ENCODE measurements at regions of chr19 and their contacts with region 1.

Region 1: GRCh38 chr19:52237771-52238400 is 31.5 kb upstream of the ZNF766 start:
- DNase-seq: peak; percentile 66
- ATAC-seq: peak; percentile 76
- H3K4me3 Mint-ChIP-seq: no peak overlapping the region
- H3K27ac Mint-ChIP-seq: no peak overlapping the region
- H3K4me1 Mint-ChIP-seq: no peaks in the 10 kb centered on the region
- H3K27me3 Mint-ChIP-seq: no peaks in the 10 kb centered on the region

Region 2: GRCh38 chr19:52022193-52022592 is 215.7 kb before region 1 on chr19:
- CTCF ChIA-PET with region 1: no interaction called
- POLR2A ChIA-PET with region 1: no interaction called
- DNase-seq: no peak
- ATAC-seq: no peak
- H3K4me3 Mint-ChIP-seq: no peak overlapping the region
- H3K27ac Mint-ChIP-seq: no peak overlapping the region
- H3K4me1 Mint-ChIP-seq: peaks cover 6% of the 10 kb centered on the region
- H3K27me3 Mint-ChIP-seq: no peaks in the 10 kb centered on the region

Region 3: DNA sequence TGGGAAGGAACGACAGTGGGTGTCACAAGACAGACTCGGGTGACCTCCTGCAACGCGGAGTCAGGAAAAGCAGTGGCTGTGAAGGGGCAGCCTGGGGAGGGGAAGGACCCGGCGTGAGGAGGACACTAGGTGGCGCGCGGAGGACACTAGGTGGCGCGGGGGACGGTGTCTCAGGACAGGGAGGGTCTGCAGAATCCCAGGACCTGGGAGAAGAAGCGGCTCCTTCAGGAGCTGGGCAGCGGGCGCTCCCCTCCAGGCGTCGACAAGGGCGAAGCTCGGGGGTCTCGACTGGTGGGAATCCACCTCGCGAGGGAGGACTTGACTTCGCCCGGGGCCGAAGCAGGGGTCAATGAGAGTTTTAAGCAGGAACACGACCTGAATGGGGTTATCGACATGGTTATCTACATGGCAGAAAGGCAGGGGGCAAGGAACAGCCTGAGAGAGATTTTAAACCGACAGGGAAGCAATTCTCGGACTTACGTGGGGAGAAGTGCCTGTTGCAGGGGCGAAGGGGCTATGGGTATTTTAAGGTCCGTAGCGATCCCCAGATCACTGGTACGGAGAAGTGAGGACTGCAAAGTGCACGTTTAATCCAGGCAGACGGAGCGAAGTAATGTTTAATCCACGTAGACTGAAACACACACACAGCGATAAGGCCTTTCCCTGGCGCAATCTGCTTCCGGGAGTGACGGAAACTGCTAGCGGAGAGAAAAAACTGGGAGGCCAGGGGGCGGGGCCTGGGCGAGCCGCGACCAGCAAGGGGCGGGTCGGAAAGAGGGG is 98.4 kb before region 1 on chr19 and contains the start of gene ZNF616:
- CTCF ChIA-PET with region 1: interaction called, 27 read pairs
- POLR2A ChIA-PET with region 1: no interaction called
- DNase-seq: peak; percentile 98
- ATAC-seq: peak; percentile 86
- H3K4me3 Mint-ChIP-seq: peak within 1 kb of the TSS; percentile 92
- H3K27ac Mint-ChIP-seq: peak within 1 kb of the TSS; percentile 93
- H3K4me1 Mint-ChIP-seq: peaks cover 29% of the 10 kb centered on the region
- H3K27me3 Mint-ChIP-seq: no peaks in the 10 kb centered on the region
- total RNA-seq, gene ZNF616: 6.2 to 8.4 TPM

Region 4: DNA sequence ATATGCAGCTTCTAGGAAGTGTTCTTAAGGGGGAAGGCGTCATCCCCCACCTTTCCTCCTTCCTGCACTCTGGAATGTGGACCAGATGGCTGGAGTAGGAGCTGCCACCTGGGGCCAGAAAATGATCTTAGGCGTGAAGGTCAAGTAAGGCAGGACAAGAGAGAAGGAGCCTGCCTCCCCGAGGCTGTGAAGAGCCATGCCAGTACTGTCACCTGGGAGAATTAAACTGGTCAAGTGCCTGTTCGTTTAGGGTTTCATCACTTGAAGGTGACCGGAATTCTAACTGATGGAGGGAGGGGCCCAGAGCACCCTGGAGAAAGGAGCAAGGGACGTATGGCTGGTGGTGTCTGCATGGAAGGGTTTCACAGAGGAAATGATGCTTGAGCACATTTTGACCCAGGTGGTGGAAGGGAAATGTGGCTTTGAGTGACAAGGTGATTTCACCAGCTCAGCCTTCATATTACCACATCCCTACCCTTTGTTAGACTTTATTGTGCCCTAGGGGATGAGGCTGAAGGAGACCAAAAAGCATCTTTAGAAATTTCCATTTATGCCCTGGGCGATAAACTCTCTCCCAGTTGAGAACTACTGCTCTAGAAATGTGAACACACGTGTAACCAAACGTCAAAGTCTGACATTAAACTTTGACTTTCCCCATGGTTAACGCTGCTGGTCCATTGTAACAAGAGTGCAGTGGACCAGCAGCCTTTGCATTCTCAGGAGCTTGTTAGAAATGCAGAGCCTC is 10.5 kb before region 1 on chr19:
- CTCF ChIA-PET with region 1: interaction called, 12 read pairs
- POLR2A ChIA-PET with region 1: no interaction called
- DNase-seq: no peak
- ATAC-seq: no peak
- H3K4me3 Mint-ChIP-seq: no peak overlapping the region
- H3K27ac Mint-ChIP-seq: no peak overlapping the region
- H3K4me1 Mint-ChIP-seq: peaks cover 14% of the 10 kb centered on the region
- H3K27me3 Mint-ChIP-seq: no peaks in the 10 kb centered on the region

Measured in activated CD8-positive, alpha-beta T cell treated with anti-CD3 and anti-CD28 coated beads, Interleukin-2, amount 10 ng/mL, durations not matched to agents 7 days and 5 days (primary cell).